ENCODE measurements at regions of chr2 and their contacts with region 1.

Region 1: GRCh38 chr2:122681626-122682025 is 926.2 kb downstream of the TSN start:
- DNase-seq: no peak
- ATAC-seq: peak; percentile 68
- H3K4me3 ChIP-seq: no peak overlapping the region
- H3K27ac ChIP-seq: no peak overlapping the region
- H3K4me1 ChIP-seq: no peaks in the 10 kb centered on the region
- H3K27me3 ChIP-seq: no peaks in the 10 kb centered on the region
- CTCF ChIP-seq: no peak
- EP300 ChIP-seq: no peak
- POLR2A ChIP-seq: no peak
- RAD21 ChIP-seq: no peak

Region 2: DNA sequence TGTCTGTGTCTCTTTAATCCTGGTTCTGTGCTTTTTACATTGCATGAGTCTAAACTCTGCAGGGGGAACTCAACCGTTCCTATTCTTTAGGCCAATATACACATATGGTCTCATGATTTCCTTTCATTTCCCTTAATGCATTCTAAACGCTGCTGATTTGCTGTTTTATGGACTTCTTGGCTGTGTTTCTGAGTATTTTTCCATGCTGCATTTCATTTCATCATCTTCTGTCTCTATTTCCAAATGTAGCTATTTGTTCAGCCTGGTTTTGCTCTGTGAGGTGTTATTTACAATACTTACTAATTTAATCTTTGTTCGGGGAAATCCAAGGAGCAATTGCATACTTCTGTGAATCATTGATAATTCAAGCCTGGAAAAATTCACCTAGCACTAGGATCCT is 29.0 kb before region 1 on chr2:
- CTCF ChIA-PET with region 1: interaction called, 4 read pairs
- POLR2A ChIA-PET with region 1: no interaction called
- RAD21 ChIA-PET with region 1: interaction called, 6 read pairs
- SMC1A ChIA-PET with region 1: interaction called, 19 read pairs
- in situ Hi-C with region 1: no loop called
- intact Hi-C with region 1: no loop called
- DNase-seq: no peak
- ATAC-seq: peak; percentile 37; the same call in 1 of the 3 replicates
- H3K4me3 ChIP-seq: no peak overlapping the region
- H3K27ac ChIP-seq: no peak overlapping the region
- H3K4me1 ChIP-seq: no peaks in the 10 kb centered on the region
- H3K27me3 ChIP-seq: no peaks in the 10 kb centered on the region
- CTCF ChIP-seq: no peak
- EP300 ChIP-seq: no peak
- POLR2A ChIP-seq: no peak
- RAD21 ChIP-seq: no peak

Region 3: DNA sequence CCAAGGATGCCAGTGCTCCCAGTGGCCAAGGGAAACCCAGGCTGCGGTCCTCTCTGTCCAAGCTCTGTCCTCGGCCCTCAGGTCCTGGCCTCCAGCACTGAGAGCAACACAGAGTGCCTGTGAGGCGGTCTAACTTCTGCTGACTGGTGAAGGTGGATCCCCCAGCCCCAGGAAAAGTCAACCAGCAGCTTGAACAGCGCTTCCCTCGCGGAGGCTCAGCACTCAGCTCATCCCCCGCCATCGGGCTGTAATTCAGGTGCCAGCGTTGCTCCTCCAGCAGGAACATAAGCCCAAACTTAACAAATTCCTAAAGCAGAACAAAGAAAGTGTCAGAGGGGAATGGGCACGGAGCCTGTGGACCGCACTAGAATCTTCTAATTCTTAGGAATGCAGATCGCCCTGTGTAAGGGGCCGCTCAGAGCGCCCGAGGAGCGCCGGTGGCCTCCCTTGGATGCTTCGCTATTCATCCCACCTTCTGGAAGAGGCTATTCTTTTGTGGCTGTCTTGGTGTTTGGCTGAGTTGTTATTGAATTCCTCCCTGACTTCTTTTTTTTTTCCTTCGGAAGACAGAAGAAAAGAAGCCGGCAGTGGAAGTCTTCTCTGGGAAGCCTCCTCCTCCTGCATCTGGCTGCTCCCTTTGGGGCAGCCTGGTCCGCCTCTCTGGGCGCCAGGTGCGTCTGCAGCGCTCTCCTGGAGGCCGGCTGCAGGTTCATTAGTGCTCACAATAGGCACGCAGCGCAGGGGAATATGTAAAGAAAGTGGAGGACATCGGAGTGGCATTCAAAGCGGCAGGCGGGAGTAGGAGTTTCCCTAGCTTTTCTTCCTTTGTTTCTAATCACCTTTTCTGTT is 20.6 kb before region 1 on chr2:
- CTCF ChIA-PET with region 1: interaction called, 7 read pairs
- POLR2A ChIA-PET with region 1: interaction called, 6 read pairs
- RAD21 ChIA-PET with region 1: interaction called, 3 read pairs
- SMC1A ChIA-PET with region 1: interaction called, 20 read pairs
- in situ Hi-C with region 1: no loop called
- intact Hi-C with region 1: no loop called
- DNase-seq: no peak
- ATAC-seq: peak; percentile 29; the same call in 2 of the 3 replicates
- H3K4me3 ChIP-seq: no peak overlapping the region
- H3K27ac ChIP-seq: no peak overlapping the region
- H3K4me1 ChIP-seq: no peaks in the 10 kb centered on the region
- H3K27me3 ChIP-seq: no peaks in the 10 kb centered on the region
- CTCF ChIP-seq: no peak
- EP300 ChIP-seq: no peak
- POLR2A ChIP-seq: no peak
- RAD21 ChIP-seq: no peak

Region 4: DNA sequence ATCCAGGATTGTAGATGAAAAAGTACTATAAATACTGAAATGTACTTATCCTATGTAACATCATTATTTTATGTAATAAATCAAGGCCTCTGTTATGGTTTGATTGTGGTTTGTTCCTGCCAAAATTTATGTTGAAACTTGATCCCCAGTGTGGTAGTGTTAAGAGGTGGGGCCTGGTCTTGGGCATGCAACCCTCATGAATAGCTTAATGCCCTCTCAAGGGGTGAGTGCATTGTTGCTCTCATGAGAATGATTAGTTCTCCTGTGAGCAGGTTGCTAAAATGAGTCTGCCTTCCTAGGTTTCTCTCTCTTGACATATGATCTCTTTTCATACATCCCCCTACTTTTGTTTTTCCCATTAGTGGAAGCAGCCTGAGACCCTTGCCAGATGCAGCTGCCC is 10.7 kb before region 1 on chr2:
- CTCF ChIA-PET with region 1: interaction called, 7 read pairs
- POLR2A ChIA-PET with region 1: interaction called, 7 read pairs
- RAD21 ChIA-PET with region 1: interaction called, 5 read pairs
- SMC1A ChIA-PET with region 1: interaction called, 20 read pairs
- in situ Hi-C with region 1: no loop called
- intact Hi-C with region 1: no loop called
- DNase-seq: no peak
- ATAC-seq: no peak
- H3K4me3 ChIP-seq: no peak overlapping the region
- H3K27ac ChIP-seq: no peak overlapping the region
- H3K4me1 ChIP-seq: no peaks in the 10 kb centered on the region
- H3K27me3 ChIP-seq: no peaks in the 10 kb centered on the region
- CTCF ChIP-seq: no peak
- EP300 ChIP-seq: no peak
- POLR2A ChIP-seq: no peak
- RAD21 ChIP-seq: no peak

Region 5: GRCh38 chr2:122692400-122693083 is 10.9 kb after region 1 on chr2:
- CTCF ChIA-PET with region 1: no interaction called
- POLR2A ChIA-PET with region 1: interaction called, 4 read pairs
- RAD21 ChIA-PET with region 1: interaction called, 3 read pairs
- SMC1A ChIA-PET with region 1: interaction called, 12 read pairs
- in situ Hi-C with region 1: no loop called
- intact Hi-C with region 1: no loop called
- DNase-seq: no peak
- ATAC-seq: no peak
- H3K4me3 ChIP-seq: no peak overlapping the region
- H3K27ac ChIP-seq: no peak overlapping the region
- H3K4me1 ChIP-seq: no peaks in the 10 kb centered on the region
- H3K27me3 ChIP-seq: no peaks in the 10 kb centered on the region
- CTCF ChIP-seq: no peak
- EP300 ChIP-seq: no peak
- POLR2A ChIP-seq: no peak
- RAD21 ChIP-seq: no peak

Region 6: DNA sequence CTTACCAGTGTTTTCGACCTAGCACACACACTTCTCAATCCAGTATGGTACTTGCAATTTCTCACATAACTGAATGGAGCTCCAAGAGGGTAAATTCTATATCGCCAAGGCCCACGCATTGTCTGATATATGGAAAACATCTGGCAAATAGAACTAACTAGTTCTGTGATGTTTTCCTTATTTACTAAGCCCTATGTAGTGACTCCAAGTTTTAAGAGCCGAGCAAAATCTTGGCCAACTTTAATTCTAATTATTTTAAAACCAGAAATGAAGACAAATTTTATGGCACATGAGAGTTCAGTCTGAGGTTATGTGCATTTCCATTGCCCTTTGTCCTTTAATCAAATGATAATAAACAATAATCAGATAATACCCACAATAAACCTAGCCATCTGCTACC is 223.8 kb after region 1 on chr2:
- CTCF ChIA-PET with region 1: no interaction called
- POLR2A ChIA-PET with region 1: no interaction called
- RAD21 ChIA-PET with region 1: no interaction called
- SMC1A ChIA-PET with region 1: no interaction called
- in situ Hi-C with region 1: no loop called
- intact Hi-C with region 1: no loop called
- DNase-seq: no peak
- ATAC-seq: no peak
- H3K4me3 ChIP-seq: no peak overlapping the region
- H3K27ac ChIP-seq: no peak overlapping the region
- H3K4me1 ChIP-seq: no peaks in the 10 kb centered on the region
- H3K27me3 ChIP-seq: no peaks in the 10 kb centered on the region
- CTCF ChIP-seq: no peak
- EP300 ChIP-seq: no peak
- POLR2A ChIP-seq: no peak
- RAD21 ChIP-seq: no peak